Activated CD4-positive, alpha-beta T cell treated with anti-CD3 and anti-CD28 coated beads, Interleukin-2, amount 10 ng/mL, durations not matched to agents 24 days and 14 days (primary cell): ENCODE measurements at regions of chr19 and their contacts with region 1.

Region 1: DNA sequence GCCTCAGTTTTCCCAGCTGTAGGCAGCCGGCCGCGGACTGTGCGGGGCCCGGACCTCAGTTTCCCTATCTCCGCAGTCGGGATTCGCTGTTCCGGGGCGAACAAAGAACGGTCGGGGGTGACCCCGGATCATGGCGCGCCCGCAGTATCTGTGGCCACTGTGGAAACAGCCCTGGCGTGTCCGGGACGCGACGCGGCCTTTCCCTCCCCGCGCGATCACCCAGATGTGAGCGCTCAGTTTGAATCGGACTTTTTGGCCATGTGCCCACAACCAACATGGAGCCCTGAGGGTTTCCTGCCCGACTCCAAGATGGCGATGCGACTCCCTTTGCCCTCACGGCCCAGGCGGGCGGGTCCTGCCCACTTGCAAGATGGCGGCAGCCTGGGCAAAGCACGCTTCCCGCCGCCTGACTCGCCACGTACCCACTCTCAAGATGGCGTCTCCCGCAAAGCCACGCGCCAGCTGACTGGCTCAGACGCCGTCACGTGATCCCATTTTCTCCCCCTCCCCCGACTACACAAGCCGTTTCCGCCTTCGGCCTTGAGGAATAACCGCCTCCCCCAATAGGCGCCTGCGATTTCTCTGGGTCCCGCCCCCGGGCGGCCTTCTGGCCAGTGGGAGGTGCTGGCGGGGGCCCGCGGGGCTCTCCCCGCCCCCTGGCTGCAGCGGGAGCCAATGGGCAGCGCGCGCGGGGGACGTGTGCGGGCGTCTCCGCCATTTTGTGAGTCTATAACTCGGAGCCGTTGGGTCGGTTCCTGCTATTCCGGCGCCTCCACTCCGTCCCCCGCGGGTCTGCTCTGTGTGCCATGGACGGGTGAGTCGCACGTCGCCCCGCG is at the start of gene PTBP1:
- DNase-seq: peak; percentile 100
- H3K4me3 Mint-ChIP-seq: peak within 1 kb of the TSS; percentile 92
- H3K27ac Mint-ChIP-seq: peak within 1 kb of the TSS; percentile 95
- H3K4me1 Mint-ChIP-seq: peaks cover 25% of the 10 kb centered on the region
- H3K27me3 Mint-ChIP-seq: peaks cover 1% of the 10 kb centered on the region
- total RNA-seq, gene PTBP1: 789 and 832 TPM in 2 replicates

Region 2: DNA sequence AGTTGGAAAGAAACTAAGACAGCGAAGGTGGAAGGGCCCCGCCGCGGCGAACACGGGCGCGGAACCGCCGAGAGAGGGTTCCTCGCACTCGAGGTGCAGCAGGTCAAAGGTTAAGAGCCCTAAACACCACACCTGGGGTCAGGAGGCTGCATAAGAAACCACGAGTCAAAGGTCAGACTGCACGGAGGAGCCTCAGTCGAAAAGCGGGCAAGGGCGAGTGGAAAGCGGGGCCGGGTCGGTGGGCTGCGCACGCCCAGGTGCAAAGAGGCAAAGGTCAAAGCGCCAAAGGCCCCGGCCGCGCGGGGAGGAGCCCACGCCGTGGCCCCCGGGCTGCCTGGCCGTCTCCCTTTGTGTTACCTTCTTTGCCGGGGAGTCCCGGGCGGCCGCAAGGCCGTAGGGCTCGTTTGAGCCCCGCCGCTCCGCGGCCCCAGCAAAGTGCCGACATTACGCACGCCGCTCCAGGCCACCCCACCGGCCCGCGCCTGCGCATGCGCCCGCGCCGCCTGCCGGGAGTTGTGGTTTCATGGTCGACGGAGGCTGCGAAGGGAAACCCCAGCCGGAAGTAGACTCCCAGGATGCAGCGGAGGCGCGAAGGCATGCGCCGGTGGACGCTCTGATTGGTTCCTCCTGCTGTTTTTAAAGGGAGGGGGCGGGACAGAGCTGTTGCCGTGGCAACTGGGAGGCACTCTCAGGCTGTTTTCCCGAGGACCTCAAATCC is 163.7 kb before region 1 on chr19 and contains the start of gene POLRMT:
- intact Hi-C with region 1: loop called (anchors 1 kb)
- DNase-seq: peak; percentile 99
- H3K4me3 Mint-ChIP-seq: peak within 1 kb of the TSS; percentile 98
- H3K27ac Mint-ChIP-seq: peak within 1 kb of the TSS; percentile 97
- H3K4me1 Mint-ChIP-seq: peaks cover 17% of the 10 kb centered on the region
- H3K27me3 Mint-ChIP-seq: no peaks in the 10 kb centered on the region
- total RNA-seq, gene POLRMT: 103 and 104 TPM in 2 replicates

Region 3: GRCh38 chr19:680287-681028 is 116.5 kb before region 1 on chr19:
- intact Hi-C with region 1: loop called (anchors 1 kb)
- DNase-seq: peak; percentile 99
- H3K4me3 Mint-ChIP-seq: peak overlapping the region; percentile 88
- H3K27ac Mint-ChIP-seq: peak overlapping the region; percentile 99
- H3K4me1 Mint-ChIP-seq: peaks cover 4% of the 10 kb centered on the region
- H3K27me3 Mint-ChIP-seq: peaks cover 3% of the 10 kb centered on the region

Region 4: DNA sequence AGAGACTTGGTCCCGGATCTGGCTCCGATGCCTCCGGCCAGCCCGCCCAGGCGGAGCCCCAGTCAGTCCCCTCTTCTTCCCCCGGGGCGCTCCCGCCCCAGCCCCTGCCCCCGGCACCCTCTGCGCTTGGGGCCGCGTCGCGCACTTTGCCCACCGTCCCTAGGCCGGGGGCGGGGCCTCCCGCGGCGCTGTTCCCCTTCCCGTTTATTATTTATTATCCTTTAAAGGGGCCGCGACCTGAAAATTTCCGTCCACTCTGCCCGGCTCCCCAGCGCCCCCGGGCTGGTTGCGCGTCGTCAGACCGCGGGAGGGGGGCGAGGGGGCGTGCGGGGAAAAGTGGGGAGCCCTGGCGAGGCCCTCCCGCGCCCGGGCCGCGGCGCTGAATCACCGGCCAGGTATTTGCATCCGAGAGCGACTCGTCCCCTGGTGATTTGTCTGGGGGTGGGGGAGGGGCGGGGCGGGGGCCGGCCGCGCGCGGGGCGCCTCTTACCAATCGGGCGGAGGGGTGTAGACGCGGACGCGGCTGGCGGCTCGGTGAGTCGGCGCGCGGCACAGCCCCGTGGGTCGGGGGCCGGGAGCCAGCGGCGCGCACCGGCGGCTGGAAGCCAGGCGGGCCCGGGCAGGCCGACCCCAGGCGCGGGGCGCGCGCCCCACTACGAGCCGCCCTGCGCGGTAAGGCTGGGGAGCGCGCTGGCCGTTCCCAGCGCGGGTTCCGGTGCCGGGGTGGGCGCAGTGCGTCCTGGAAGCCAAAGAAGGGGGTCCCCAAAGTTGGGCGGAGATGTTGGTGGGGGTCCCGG is 128.8 kb after region 1 on chr19 and contains the start of gene ARID3A:
- intact Hi-C with region 1: loop called (anchors 2 kb)
- DNase-seq: peak; percentile 94
- H3K4me3 Mint-ChIP-seq: peak within 1 kb of the TSS; percentile 86
- H3K27ac Mint-ChIP-seq: peak within 1 kb of the TSS; percentile 83
- H3K4me1 Mint-ChIP-seq: peaks cover 11% of the 10 kb centered on the region
- H3K27me3 Mint-ChIP-seq: no peaks in the 10 kb centered on the region
- total RNA-seq, gene ARID3A: 35.6 and 36.6 TPM in 2 replicates

Region 5: DNA sequence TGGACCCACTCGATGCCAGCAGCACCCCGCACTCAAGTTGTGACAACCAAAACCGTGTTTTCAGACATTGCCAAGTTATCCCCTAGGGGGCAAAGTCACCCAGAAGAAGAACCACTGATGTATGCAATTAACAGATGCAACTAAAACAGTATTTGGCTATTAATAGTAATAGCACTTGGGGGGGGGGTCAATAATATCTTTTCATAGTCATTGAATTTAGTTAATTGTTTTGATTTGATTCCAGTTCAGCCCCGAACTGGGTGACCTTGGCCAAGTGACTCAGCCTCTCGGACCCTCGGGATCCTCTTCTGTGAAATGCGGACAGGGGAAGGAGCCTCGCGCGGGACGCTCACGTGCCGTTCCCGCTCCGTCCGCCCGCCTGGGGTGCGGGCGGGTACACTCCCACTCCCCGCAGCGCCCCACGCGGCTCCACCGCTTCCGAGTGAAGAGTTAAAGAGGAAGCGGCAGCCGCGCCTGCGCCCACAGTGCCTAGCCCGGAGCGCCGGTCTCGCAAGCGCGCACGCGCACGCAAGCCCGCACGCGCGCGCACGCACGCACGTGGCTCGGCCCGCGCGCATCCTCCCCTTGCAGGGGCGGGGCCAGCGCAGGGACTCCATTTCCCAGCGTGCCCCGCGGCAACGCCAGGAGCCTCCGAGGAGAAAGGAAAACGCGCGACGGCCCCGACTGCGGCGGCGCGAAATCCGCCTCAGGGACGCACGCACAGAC is 610.0 kb after region 1 on chr19:
- intact Hi-C with region 1: loop called (anchors 1 kb)
- DNase-seq: peak; percentile 100
- H3K4me3 Mint-ChIP-seq: peak overlapping the region; percentile 76
- H3K27ac Mint-ChIP-seq: peak overlapping the region; percentile 81
- H3K4me1 Mint-ChIP-seq: peaks cover 37% of the 10 kb centered on the region
- H3K27me3 Mint-ChIP-seq: peaks cover 6% of the 10 kb centered on the region